ENCODE measurements at regions of chr20 and their contacts with region 1.

Region 1: DNA sequence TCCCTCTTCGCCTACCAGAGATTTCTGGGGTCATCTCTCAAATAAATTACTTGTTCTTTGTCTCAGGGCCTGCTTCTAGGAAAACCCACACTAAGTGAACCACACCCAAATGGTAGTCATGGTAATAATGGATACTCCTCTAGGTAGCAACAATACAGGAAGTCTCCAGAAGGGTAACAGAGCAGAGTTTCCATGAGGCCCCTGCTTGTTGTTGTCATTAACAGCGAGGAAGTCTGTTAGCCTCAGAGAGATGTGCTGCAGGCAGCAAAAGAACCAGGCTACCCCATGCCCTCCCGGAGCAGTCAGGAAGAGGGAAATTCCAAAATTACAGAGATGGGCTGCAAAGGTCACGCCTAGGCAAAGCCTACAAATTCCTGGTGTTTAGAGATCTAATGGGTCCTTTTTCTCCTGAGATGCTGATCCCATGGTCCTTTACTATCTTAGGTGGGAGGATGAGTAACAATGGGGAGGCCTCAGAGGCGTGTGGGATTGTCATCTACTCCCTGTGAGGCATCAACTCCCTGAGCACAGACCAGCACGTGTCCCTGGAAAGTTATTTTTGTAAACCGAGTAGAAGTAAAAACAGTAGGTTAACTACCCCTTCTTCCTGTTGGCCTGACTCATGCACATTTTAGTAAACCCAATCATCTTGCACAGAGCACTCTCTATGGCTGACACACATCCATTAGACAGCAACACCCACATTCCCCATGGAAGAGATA is 10.1 kb downstream of the ISM1 start:
- DNase-seq: peak; percentile 57
- H3K4me3 Mint-ChIP-seq: no peak overlapping the region
- H3K27ac Mint-ChIP-seq: peak overlapping the region; percentile 40
- H3K4me1 Mint-ChIP-seq: peaks cover 42% of the 10 kb centered on the region
- H3K27me3 Mint-ChIP-seq: no peaks in the 10 kb centered on the region

Region 2: DNA sequence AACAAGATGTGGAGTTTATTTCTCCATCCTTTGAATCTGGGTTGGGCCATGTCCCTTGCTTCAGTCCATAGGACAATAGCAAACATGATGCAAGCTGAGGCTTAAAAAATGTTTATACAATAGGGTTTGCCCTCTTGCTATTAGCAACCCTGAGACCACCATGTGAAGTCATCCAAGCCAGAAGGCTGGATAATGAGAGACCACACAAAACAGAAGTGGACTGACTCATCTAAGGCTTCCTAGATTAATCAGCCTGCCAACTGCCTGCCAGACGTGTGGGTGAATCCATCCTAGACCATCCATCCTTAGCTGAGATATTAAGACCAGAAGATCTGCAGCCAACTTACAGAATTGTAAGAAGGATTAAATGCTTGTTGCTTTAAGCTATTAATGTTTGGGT is 48.2 kb before region 1 on chr20:
- CTCF ChIA-PET with region 1: no interaction called
- POLR2A ChIA-PET with region 1: no interaction called
- intact Hi-C with region 1: loop called (anchors 1 kb)
- DNase-seq: peak; percentile 29
- H3K4me3 Mint-ChIP-seq: no peak overlapping the region
- H3K27ac Mint-ChIP-seq: no peak overlapping the region
- H3K4me1 Mint-ChIP-seq: no peaks in the 10 kb centered on the region
- H3K27me3 Mint-ChIP-seq: peaks cover 3% of the 10 kb centered on the region

Region 3: DNA sequence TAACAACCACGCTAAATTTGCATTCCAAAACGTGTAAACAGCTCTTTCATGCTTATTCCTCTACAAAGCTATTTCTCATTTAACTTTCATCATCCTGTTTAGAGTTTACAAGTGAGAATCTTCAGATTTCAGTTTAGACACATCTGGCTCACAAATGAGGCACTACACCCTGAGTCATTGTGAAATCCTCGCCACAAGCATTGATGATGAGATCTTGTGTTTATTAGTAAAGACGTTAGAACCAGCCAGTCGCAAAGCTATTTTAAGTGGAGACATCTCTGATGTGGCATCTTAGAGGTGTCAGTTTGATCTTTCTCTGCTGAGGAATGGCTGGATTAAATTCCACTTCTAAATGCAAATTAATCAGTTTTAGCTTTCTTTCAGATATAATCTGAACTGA is 18.4 kb before region 1 on chr20:
- CTCF ChIA-PET with region 1: no interaction called
- POLR2A ChIA-PET with region 1: no interaction called
- intact Hi-C with region 1: loop called (anchors 1 kb)
- DNase-seq: peak; percentile 31
- H3K4me3 Mint-ChIP-seq: no peak overlapping the region
- H3K27ac Mint-ChIP-seq: no peak overlapping the region
- H3K4me1 Mint-ChIP-seq: peaks cover 3% of the 10 kb centered on the region
- H3K27me3 Mint-ChIP-seq: peaks cover 27% of the 10 kb centered on the region

Measured in activated CD4-positive, alpha-beta memory T cell treated with anti-CD3 and anti-CD28 coated beads for 36 hours (primary cell).